HepG2 (cell line): ENCODE measurements at regions of chr12 and their contacts with region 1.

Region 1: DNA sequence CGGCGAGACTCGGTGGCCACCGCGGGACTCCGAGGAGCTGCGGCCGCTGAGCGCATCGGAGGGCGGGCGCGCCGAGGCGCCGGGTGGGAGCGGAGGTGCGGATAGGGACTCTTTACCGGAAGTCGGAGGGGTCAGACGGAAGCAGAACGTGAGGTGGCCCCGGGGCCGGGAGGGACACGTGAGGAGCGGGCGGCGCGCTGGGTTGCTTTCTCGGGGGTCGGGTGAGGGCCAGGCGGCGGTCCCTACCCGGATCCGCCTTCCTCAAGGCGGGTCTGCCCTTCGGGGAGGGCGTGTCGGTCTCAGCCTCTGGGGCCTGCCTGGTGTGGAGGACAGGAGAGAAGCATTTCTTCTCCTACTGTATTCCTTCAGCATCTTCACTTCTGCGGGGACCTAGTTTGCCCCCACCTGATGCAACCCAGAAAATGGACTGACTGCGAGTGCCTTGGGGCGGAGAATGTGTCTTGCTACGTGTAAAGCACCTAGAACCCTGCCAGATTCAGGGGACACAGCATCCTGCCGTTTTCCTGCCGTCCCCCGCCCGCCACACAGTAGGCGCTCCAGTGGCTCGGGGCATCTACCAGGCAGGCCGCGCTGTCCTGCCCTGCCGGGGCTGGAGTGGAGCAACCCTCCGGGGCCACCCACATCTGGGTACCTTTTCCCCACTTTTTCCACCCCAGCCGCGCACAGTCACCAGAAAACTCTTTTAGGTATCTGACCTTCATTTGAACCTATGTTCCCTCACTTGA is 517 bp upstream of the ATXN2 start:
- DNase-seq: peak; percentile 81
- ATAC-seq: peak; percentile 88
- H3K4me3 ChIP-seq: peak overlapping the region; percentile 71 to 98 (median 86)
- H3K27ac ChIP-seq: peak overlapping the region; percentile 97
- H3K4me1 ChIP-seq: peaks cover 32% of the 10 kb centered on the region
- H3K27me3 ChIP-seq: no peaks in the 10 kb centered on the region; a peak in 1 of 5 replicates
- CTCF ChIP-seq: no peak
- EP300 ChIP-seq: no peak
- POLR2A ChIP-seq: peak; percentile 75 to 83
- RAD21 ChIP-seq: no peak

Region 2: GRCh38 chr12:111616177-111616623 is 16.6 kb after region 1 on chr12:
- CTCF ChIA-PET with region 1: no interaction called
- POLR2A ChIA-PET with region 1: interaction called, 3 read pairs
- in situ Hi-C with region 1: no loop called
- intact Hi-C with region 1: loop called (anchors 1 kb)
- DNase-seq: peak; percentile 67
- ATAC-seq: peak; percentile 76
- H3K4me3 ChIP-seq: peak overlapping the region in 1 of 3 experiments; percentile 1; a peak in 1 of 6 replicates
- H3K27ac ChIP-seq: peak overlapping the region; percentile 22
- H3K4me1 ChIP-seq: peaks cover 12% of the 10 kb centered on the region
- H3K27me3 ChIP-seq: no peaks in the 10 kb centered on the region
- CTCF ChIP-seq: no peak
- EP300 ChIP-seq: no peak
- POLR2A ChIP-seq: no peak
- RAD21 ChIP-seq: no peak